Activated T-helper 2 cell treated with anti-CD3 and anti-CD28 coated beads, Interferon-gamma antibody, Interleukin-2, Interleukin-4, amounts not matched to agents 10 μg/mL and 5 μg/mL and 100 μg/mL, durations not matched to agents 14 hours and 24 hours and 36 hours (primary cell): ENCODE measurements at regions of chr5 and their contacts with region 1.

Region 1: GRCh38 chr5:159773062-159773924 is 143.0 kb upstream of the ADRA1B start:
- DNase-seq: peak; percentile 79
- H3K4me3 Mint-ChIP-seq: peak overlapping the region; percentile 26
- H3K27ac Mint-ChIP-seq: peak overlapping the region; percentile 42
- H3K4me1 Mint-ChIP-seq: peaks cover 38% of the 10 kb centered on the region
- H3K27me3 Mint-ChIP-seq: peaks cover 13% of the 10 kb centered on the region

Region 2: DNA sequence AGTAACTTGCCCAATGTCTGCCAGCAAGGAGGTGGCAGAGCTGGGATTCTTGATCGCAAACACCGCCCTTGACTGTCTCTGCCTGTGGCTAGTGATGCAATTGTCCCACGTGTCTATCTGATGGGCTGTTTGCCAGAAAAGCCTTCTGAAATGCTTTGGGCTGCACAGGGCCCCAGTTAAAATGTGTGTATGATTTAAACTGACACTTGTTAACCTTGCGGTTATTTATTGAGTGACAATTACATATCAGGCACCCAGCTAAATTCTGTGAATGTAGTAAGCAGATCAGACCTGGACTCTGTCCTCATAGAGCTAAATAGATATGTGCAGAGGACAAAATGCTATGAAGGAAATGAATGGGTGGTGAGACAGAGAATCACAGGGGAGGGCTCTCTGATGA is 431.4 kb before region 1 on chr5:
- intact Hi-C with region 1: loop called (anchors 5 kb)
- DNase-seq: peak; percentile 28
- H3K4me3 Mint-ChIP-seq: no peak overlapping the region
- H3K27ac Mint-ChIP-seq: no peak overlapping the region
- H3K4me1 Mint-ChIP-seq: peaks cover 50% of the 10 kb centered on the region
- H3K27me3 Mint-ChIP-seq: peaks cover 14% of the 10 kb centered on the region

Region 3: GRCh38 chr5:159412284-159413046 is 360.8 kb before region 1 on chr5:
- intact Hi-C with region 1: loop called (anchors 2 kb)
- DNase-seq: peak; percentile 79
- H3K4me3 Mint-ChIP-seq: no peak overlapping the region
- H3K27ac Mint-ChIP-seq: no peak overlapping the region
- H3K4me1 Mint-ChIP-seq: peaks cover 48% of the 10 kb centered on the region
- H3K27me3 Mint-ChIP-seq: peaks cover 32% of the 10 kb centered on the region

Region 4: DNA sequence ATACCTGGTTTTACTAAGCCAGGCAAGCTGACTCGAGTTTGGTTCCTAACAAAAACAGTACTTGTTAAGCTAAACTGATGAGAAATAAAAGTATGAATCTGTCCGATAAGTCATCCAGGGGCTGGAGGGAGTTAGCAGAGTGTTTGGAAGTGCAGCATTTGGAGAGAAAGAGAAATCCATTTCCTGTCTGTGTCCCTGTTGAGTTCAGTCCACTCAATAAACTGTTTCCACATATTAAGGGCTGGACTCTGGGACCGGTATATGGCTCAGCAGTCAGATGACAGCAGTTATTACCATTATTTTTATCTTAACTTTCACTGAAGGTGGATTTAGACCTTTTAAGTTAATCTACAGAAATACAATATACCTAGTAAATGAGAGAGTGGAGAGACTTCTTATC is 12.4 kb after region 1 on chr5:
- intact Hi-C with region 1: loop called (anchors 1 kb)
- DNase-seq: no peak
- H3K4me3 Mint-ChIP-seq: no peak overlapping the region
- H3K27ac Mint-ChIP-seq: no peak overlapping the region
- H3K4me1 Mint-ChIP-seq: peaks cover 25% of the 10 kb centered on the region
- H3K27me3 Mint-ChIP-seq: peaks cover 11% of the 10 kb centered on the region

Region 5: DNA sequence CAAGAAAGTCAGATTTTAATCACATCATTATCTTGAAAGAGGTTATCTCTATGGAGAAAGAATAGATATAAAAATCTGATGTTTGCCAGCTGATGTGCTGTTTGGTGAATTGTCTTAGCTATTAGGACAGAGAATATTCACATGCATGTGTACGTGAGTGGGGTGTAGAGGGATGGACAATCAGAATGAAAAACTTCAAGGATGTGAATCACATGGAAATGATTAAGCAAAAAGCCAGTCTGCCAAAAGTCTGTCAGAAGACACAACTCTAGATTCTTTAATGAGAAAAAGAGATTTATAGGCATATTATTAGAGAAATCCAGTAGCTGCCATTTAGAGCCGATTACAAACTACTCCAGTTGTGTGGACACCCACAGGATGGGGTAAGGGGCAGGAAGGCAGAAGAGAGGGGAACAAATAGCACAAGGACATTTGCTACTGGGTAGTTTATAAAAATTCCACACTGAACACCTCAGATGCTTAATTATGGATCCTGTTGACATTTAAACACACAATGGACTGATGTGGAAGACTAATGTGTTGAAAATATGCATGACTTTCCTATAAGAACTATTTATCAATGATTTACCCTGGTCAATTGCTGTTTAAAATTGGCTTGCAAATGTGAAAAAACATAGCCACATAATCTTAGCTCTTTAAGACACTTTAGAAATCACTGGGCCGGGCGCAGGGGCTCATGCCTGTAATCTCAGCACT is 775.8 kb after region 1 on chr5:
- intact Hi-C with region 1: loop called (anchors 10 kb)
- DNase-seq: no peak
- H3K4me3 Mint-ChIP-seq: no peak overlapping the region
- H3K27ac Mint-ChIP-seq: no peak overlapping the region
- H3K4me1 Mint-ChIP-seq: peaks cover 38% of the 10 kb centered on the region
- H3K27me3 Mint-ChIP-seq: no peaks in the 10 kb centered on the region